Activated CD4-positive, alpha-beta memory T cell treated with anti-CD3 and anti-CD28 coated beads for 36 hours (primary cell): ENCODE measurements at regions of chr4 and their contacts with region 1.

Region 1: DNA sequence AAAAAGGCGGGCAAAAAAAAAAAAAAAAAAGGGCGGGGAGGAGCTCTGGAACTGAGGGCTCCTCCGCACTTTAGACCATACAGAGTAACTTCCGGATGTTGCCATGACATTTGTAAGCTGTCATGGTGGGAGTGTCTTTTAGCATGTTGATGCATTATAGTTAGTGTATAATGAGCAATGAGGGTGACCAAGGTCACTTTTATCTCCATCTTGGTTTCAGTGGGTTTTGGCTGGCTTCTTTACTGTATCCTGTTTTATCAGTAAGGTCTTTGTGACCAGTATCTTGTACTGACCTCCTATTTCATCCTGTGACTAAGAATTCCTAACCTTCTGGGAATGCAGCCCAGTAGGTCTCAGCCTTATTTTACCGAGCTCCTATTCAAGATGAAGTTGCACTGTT is 193.4 kb downstream of the UGT8 start:
- DNase-seq: no peak
- H3K4me3 Mint-ChIP-seq: no peak overlapping the region
- H3K27ac Mint-ChIP-seq: no peak overlapping the region
- H3K4me1 Mint-ChIP-seq: no peaks in the 10 kb centered on the region
- H3K27me3 Mint-ChIP-seq: peaks cover 4% of the 10 kb centered on the region

Region 2: DNA sequence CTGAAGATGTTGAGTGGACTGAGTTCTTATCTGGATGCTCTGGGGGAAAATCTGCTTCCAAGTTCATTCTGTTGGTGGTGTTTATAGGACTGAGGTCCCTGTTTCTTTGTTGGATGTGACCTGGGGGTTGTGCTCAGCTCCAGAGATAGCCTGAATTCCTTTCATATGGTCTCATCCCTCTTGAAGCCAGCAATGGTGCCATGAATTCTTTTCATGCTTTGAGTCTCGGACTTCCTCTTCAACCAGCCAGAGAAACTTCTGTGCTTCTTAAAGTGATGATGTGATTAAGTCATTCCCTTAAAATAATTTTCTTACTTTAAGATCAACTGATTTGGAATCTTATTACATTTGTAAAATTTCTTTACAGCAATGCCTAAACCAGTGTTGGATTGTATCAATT is 427.1 kb before region 1 on chr4:
- CTCF ChIA-PET with region 1: no interaction called
- POLR2A ChIA-PET with region 1: no interaction called
- intact Hi-C with region 1: no loop called
- DNase-seq: no peak
- H3K4me3 Mint-ChIP-seq: no peak overlapping the region
- H3K27ac Mint-ChIP-seq: no peak overlapping the region
- H3K4me1 Mint-ChIP-seq: no peaks in the 10 kb centered on the region
- H3K27me3 Mint-ChIP-seq: no peaks in the 10 kb centered on the region

Region 3: GRCh38 chr4:114780205-114780604 is 11.8 kb before region 1 on chr4:
- CTCF ChIA-PET with region 1: no interaction called
- POLR2A ChIA-PET with region 1: no interaction called
- intact Hi-C with region 1: no loop called
- DNase-seq: no peak
- H3K4me3 Mint-ChIP-seq: no peak overlapping the region
- H3K27ac Mint-ChIP-seq: no peak overlapping the region
- H3K4me1 Mint-ChIP-seq: no peaks in the 10 kb centered on the region
- H3K27me3 Mint-ChIP-seq: peaks cover 7% of the 10 kb centered on the region

Region 4: GRCh38 chr4:114807759-114808404 is 15.9 kb after region 1 on chr4:
- CTCF ChIA-PET with region 1: interaction called, 23 read pairs
- POLR2A ChIA-PET with region 1: no interaction called
- intact Hi-C with region 1: no loop called
- DNase-seq: peak; percentile 43
- H3K4me3 Mint-ChIP-seq: no peak overlapping the region
- H3K27ac Mint-ChIP-seq: no peak overlapping the region
- H3K4me1 Mint-ChIP-seq: no peaks in the 10 kb centered on the region
- H3K27me3 Mint-ChIP-seq: peaks cover 8% of the 10 kb centered on the region